Prostate gland (tissue), 2 donors: ENCODE measurements at regions of chr1 and their contacts with region 1.

Region 1: DNA sequence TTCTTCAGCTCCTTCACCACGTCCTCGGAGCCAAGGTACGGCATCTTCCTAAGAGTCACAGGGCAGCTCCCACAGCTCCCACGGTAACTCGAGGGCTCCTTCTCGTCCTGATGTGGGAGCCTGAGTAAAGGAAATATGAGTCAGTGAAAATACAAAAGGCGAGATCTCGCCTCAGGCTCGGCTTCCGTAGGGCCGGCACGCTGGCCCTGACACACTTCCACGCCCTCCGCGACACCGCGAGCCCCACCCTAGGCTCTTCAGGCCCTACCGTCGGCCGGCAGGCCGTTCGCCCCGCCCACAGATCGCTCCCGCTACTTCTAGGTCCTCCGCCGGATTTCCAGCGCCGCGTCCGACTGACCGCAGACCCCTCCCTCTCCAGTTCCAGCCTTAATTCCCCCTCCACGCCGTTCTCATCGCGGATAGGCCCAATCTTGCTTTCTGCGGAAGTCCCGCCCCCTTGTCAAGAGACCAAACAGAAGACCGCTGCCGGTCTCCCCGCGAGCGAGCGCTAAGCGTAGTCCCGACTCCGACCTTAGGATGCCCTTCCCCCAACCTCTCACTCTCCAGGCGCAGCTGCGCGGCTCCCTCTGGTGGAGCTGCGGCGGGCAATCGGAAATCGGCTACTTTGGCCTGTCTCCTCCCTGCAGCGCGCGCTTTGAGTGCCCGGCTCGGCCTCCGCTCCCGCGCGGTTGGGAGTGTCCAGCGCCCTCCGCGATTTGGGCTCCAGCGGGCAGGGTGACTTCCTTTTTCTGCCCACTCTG is at the starts of genes AP4B1 and DCLRE1B:
- DNase-seq: peak; percentile 98
- H3K4me3 ChIP-seq: peak within 1 kb of the TSS; percentile 48 to 55
- H3K27ac ChIP-seq: peak within 1 kb of the TSS; percentile 86
- H3K4me1 ChIP-seq: no peaks in the 10 kb centered on the region
- H3K27me3 ChIP-seq: no peaks in the 10 kb centered on the region
- CTCF ChIP-seq: peak; percentile 62 to 93 (median 86)
- POLR2A ChIP-seq: peak; percentile 50
- total RNA-seq, gene AP4B1: 5.0 to 14.8 TPM
- total RNA-seq, gene DCLRE1B: 4.2 to 10.1 TPM

Region 2: GRCh38 chr1:113140588-113141446 is 764.0 kb before region 1 on chr1:
- intact Hi-C with region 1: loop called (anchors 10 kb)
- DNase-seq: peak; percentile 60
- H3K4me3 ChIP-seq: no peak overlapping the region
- H3K27ac ChIP-seq: no peak overlapping the region
- H3K4me1 ChIP-seq: no peaks in the 10 kb centered on the region
- H3K27me3 ChIP-seq: no peaks in the 10 kb centered on the region
- CTCF ChIP-seq: peak; percentile 46 to 89 (median 82)
- POLR2A ChIP-seq: no peak

Region 3: DNA sequence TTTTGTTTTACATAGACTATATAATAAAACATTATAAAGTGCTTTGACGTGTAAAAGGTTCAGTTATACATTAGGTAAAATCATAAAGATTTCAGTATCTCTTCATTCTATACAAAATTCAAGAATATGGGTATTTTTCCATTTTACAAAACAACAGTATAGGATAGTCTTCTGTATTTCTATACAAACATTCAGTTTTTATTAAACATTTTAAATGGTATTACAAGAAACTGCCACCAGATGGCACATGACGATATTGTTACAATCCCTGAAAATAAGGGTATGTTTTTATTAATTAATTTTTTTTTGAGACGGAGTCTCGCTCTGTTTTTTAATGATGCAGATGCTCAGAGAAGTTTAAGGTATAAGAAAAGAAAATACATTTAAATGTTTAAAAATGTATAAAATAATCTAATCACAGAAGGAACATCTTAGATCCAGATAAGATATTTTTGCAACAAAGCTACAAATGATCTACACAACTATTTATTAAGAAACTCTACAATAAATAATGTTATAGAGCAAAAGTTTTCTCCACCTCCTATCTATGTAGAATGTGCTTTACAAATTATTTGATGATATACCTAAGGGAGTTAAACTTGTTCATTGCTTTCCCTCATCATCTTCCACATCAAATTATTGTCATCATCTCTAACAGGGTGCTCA is 69.1 kb before region 1 on chr1:
- intact Hi-C with region 1: loop called (anchors 5 kb)
- DNase-seq: no peak
- H3K4me3 ChIP-seq: no peak overlapping the region
- H3K27ac ChIP-seq: no peak overlapping the region
- H3K4me1 ChIP-seq: no peaks in the 10 kb centered on the region
- H3K27me3 ChIP-seq: no peaks in the 10 kb centered on the region
- CTCF ChIP-seq: peak; percentile 28 to 73 (median 68)
- POLR2A ChIP-seq: no peak

Region 4: GRCh38 chr1:113928941-113929749 is 24.3 kb after region 1 on chr1 and contains the start of gene HIPK1:
- intact Hi-C with region 1: loop called (anchors 1 kb)
- DNase-seq: peak; percentile 91
- H3K4me3 ChIP-seq: peak within 1 kb of the TSS; percentile 82 to 96
- H3K27ac ChIP-seq: peak within 1 kb of the TSS; percentile 92 to 95
- H3K4me1 ChIP-seq: no peaks in the 10 kb centered on the region
- H3K27me3 ChIP-seq: no peaks in the 10 kb centered on the region
- CTCF ChIP-seq: peak in 2 of 4 experiments; percentile 10 to 27
- POLR2A ChIP-seq: peak; percentile 61
- total RNA-seq, gene HIPK1: 43.5 to 76.3 TPM